ENCODE measurements at regions of chr11 and their contacts with region 1.

Region 1: GRCh38 chr11:207208-207862 is at the starts of genes BET1L and RIC8A:
- DNase-seq: peak; percentile 95 to 99 (median 97)

Region 2: DNA sequence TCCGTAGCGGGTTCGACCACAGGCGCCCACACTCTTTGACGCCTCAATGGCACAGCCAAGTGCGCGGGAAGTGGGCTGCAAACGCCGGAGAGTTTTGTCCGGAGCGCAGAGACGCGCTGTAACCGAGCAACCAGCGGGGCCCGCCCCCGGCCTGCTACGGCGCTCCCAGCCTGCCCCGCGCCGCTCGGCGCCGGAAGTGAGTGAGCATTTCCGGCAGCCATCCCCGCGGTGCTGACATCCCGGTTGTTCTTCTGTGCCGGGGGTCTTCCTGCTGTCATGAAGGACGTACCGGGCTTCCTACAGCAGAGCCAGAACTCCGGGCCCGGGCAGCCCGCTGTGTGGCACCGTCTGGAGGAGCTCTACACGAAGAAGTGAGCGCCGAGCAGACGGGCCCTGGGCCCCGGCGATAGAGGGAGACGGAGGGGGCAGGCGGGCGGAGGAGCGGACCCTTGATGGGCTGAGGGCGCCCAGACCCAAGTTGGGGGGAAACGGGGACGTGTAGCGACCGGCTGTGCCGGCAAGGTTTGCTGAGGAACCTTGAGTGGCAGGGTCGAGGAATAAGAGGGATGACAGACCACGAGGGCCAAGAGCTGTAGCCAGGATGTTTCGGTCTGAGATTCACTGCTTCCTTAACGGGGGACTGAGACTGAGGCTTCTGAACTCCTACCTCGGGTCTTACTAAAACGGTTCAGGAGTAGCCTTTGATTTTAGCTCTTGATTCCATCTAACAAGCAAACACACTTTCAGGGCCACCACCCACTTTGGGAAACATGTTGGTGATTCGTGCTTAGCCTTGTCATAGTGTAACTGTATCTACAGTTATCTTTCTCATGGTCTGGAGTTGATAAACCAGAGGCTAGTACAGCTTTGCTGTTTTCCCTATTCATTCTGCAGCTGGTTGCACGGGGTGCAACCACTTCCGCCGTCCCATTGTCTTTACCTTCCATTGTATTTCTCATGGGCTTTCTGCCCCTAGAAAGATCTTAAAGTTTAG is 29.7 kb after region 1 on chr11 and contains the start of gene PSMD13:
- intact Hi-C with region 1: loop called (anchors 1 kb)
- DNase-seq: peak; percentile 65 to 95 (median 88)

Region 3: GRCh38 chr11:355581-356458 is 148.5 kb after region 1 on chr11:
- intact Hi-C with region 1: loop called (anchors 10 kb)
- DNase-seq: peak; percentile 51 to 91 (median 79)

Region 4: DNA sequence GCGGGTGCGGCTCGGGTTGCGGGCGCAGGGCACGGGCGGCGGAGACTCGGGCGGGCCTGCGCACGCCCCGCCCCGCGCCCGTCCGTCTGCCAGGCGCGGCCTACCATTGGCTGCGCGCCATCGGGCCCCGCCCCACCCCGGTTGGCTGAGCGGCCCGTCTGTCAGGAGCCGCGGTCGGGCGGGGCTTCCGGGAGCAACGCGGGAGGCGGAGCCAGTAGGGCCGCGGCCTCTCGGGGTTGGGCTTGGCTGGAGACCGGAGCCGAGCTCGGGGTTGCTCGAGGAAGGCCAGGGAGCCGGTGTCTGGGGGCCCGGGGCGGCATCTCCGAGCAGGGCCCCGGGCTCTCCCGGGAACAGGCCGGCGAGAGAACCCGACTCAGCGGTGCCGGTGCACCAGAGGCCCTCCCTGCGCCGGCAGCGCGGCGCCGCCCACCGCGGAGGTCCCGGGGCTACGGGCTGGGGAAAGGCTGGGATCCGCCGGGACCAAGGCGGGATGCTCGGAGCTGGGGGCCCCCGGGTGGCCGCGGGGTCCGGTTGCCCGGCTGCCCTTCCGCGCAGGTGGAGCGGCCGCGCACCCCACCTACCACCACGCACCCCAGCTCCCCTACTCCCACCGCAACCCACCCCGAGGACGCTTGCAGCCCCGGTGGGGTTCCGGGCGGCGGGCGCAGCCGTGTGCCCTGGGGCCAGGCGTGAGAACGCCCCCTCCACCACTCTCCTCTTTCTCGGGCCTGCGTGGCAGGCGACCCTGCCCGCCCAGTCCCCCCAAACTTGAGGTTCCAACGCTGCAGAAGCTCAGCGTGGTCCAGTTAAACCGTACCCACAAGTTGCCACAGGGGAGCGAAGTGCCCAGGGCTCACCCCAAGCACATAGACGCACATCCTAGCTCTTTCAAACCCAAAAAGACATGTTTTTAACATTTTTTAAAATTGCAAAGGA is 328.5 kb after region 1 on chr11 and contains the start of gene HRAS:
- intact Hi-C with region 1: no loop called
- DNase-seq: peak; percentile 82 to 99 (median 97)

Measured in head of caudate nucleus (tissue), 42 donors.